Head of caudate nucleus (tissue), 42 donors: ENCODE measurements at regions of chr17 and their contacts with region 1.

Region 1: DNA sequence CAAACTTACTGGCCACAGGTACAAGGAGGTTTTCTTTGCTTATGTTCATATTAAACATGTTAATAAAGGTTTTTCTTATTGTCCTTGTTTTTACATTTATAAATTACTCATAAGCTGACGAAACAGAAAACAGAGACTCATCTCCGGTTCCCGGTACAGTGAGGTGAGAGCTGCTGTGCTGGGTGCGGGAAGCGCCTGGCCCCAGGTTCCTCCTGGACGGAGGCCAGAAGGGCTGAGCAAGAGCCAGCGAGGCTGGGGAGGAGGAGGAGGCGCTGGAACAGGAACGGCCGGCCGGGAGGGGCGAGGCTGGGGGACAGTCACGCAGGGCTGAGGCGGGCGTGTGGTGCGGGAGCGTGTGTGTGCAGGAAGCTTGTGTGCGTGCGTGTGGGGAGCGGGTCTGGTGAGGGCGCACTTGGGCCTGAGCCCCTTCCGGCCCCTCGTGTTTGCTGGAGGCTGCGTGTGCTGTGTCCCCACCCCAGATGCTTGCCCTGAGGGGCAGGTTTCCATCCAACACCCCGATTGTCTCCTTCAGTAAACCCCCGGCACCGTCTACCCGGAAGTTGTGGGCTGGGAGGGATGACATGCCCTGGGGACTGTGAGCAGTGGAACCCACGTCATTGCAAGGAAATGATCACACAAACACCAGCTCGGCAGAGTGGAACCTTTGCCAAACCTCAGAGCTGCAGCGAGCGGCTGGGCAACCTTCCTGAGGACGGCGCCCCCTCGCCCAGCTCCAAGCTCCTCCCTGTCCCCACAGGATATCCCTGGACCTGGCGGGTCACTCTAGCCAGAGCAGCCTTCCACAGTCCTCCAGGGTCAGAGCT is 19.5 kb downstream of the CD7 start:
- DNase-seq: peak in 41 of 42 donors; percentile 20 to 82 (median 52)

Region 2: GRCh38 chr17:82263641-82264040 is 34.3 kb before region 1 on chr17:
- intact Hi-C with region 1: loop called (anchors 5 kb)
- DNase-seq: no peak

Region 3: DNA sequence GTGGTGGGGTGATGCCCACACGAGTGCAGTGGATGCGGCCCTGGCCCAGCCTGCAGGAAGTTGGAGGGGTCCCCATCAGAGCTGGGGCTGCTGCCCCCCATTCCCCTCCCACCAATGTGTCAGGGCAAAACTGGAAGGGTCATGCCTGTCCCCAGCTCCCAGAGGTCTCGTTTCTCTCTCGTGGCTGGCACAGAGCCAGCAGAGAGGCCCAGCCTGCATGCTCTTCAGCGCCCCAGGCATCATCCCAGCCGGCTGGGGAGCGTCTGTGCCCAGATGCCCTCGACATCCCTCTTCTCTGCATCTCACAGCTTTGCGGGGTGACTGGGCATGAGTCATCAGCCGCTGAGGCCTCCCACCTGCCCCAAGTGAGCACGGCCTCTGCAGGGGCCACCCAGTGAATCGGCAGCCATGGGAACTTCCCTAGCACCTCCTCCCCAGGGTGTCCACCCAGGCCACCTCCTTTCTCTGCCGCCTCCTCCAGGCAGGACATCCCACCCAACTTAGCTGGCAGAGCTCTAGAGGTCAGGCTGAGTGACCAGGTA is 14.6 kb before region 1 on chr17:
- intact Hi-C with region 1: no loop called
- DNase-seq: peak in 16 of 42 donors; percentile 19 to 67 (median 32)

Region 4: GRCh38 chr17:82370471-82371332 is 72.8 kb after region 1 on chr17:
- intact Hi-C with region 1: no loop called
- DNase-seq: peak in 38 of 42 donors; percentile 23 to 80 (median 48)

Region 5: GRCh38 chr17:82384730-82385481 is 87.0 kb after region 1 on chr17:
- intact Hi-C with region 1: no loop called
- DNase-seq: peak in 5 of 42 donors; percentile 19 to 52 (median 38)